H1 (cell line): ENCODE measurements at regions of chr1 and their contacts with region 1.

Region 1: DNA sequence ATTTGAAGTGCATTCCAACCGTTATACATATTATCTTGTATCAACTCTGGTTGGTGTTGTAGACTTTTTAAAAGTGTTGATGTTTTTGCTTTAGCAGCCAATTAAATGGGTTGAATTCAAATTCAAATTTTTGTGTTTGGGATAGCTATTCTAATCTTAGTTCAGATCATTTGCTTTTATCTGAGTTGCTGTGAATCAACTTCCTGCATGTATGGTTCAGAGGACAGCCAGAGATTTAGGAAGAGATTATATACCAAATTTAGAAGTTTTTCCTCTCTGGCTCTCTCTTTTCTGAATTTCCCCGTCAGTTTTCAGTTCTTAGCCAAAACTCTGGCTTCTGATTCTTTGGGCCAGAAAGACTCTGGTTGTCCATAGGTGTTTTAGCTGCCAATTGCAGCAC is 415.5 kb downstream of the NUF2 start:
- DNase-seq: no peak
- H3K4me3 ChIP-seq: no peak overlapping the region
- H3K27ac ChIP-seq: no peak overlapping the region
- H3K4me1 ChIP-seq: no peaks in the 10 kb centered on the region
- H3K27me3 ChIP-seq: no peaks in the 10 kb centered on the region
- CTCF ChIP-seq: no peak
- EP300 ChIP-seq: no peak
- POLR2A ChIP-seq: no peak
- RAD21 ChIP-seq: no peak

Region 2: DNA sequence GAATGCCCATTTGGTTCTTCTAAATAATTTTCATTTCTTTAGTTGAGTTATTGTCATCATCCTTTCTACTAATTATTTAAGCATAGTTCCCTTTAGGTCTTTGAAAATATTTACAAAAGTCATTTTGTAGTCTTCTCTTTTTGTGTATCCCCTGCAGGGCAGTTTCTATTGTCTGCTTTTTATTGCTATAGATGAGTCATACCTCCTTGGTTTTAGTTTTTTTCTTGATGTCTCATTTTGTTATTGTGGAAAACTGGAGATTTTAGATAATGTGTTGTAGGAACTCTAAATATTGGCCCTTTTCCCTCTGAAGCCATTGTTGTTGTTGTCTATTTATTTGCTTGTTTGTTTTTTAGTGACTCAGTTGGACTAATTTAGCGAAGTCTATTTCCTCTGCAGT is 27.6 kb before region 1 on chr1:
- CTCF ChIA-PET with region 1: no interaction called
- POLR2A ChIA-PET with region 1: no interaction called
- DNase-seq: no peak
- H3K4me3 ChIP-seq: no peak overlapping the region
- H3K27ac ChIP-seq: no peak overlapping the region
- H3K4me1 ChIP-seq: no peaks in the 10 kb centered on the region
- H3K27me3 ChIP-seq: no peaks in the 10 kb centered on the region; a peak in 1 of 7 replicates
- CTCF ChIP-seq: no peak
- EP300 ChIP-seq: no peak
- POLR2A ChIP-seq: no peak
- RAD21 ChIP-seq: no peak

Region 3: GRCh38 chr1:163747261-163747660 is 10.0 kb after region 1 on chr1:
- CTCF ChIA-PET with region 1: interaction called, 10 read pairs
- POLR2A ChIA-PET with region 1: no interaction called
- DNase-seq: no peak
- H3K4me3 ChIP-seq: no peak overlapping the region
- H3K27ac ChIP-seq: no peak overlapping the region
- H3K4me1 ChIP-seq: no peaks in the 10 kb centered on the region
- H3K27me3 ChIP-seq: no peaks in the 10 kb centered on the region
- CTCF ChIP-seq: no peak
- EP300 ChIP-seq: no peak
- POLR2A ChIP-seq: no peak
- RAD21 ChIP-seq: no peak

Region 4: DNA sequence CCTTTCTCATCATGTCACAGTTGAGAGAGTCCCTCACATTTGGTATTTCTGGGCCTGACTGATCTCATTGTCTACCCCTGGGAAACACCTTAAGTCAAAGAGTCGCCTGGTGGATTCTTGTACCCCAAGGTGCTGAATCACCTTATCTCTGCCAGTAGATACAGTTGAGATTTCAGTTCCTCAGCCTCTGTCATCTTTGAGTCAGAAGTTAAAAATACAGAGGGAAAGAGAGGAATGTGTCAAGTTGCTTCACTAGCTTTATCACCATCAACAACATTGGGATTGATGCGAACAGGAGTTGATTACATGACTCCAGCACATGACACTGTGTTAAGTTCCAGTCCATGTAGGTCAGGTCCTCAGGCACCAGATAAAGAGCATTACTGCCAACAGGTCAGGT is 97.5 kb after region 1 on chr1:
- CTCF ChIA-PET with region 1: no interaction called
- POLR2A ChIA-PET with region 1: no interaction called
- DNase-seq: no peak
- H3K4me3 ChIP-seq: no peak overlapping the region
- H3K27ac ChIP-seq: no peak overlapping the region
- H3K4me1 ChIP-seq: no peaks in the 10 kb centered on the region; a peak in 1 of 7 replicates
- H3K27me3 ChIP-seq: no peaks in the 10 kb centered on the region
- CTCF ChIP-seq: no peak
- EP300 ChIP-seq: no peak
- POLR2A ChIP-seq: no peak
- RAD21 ChIP-seq: no peak